Thyroid gland (tissue), 4 donors: ENCODE measurements at regions of chr3 and their contacts with region 1.

Region 1: GRCh38 chr3:150335631-150336030 is 72.5 kb upstream of the TSC22D2 start:
- DNase-seq: no peak
- H3K4me3 ChIP-seq: no peak overlapping the region
- H3K27ac ChIP-seq: no peak overlapping the region
- H3K4me1 ChIP-seq: peaks cover 0 to 5% of the 10 kb centered on the region in 2 donors
- H3K27me3 ChIP-seq: no peaks in the 10 kb centered on the region
- CTCF ChIP-seq: no peak
- POLR2A ChIP-seq: no peak

Region 2: DNA sequence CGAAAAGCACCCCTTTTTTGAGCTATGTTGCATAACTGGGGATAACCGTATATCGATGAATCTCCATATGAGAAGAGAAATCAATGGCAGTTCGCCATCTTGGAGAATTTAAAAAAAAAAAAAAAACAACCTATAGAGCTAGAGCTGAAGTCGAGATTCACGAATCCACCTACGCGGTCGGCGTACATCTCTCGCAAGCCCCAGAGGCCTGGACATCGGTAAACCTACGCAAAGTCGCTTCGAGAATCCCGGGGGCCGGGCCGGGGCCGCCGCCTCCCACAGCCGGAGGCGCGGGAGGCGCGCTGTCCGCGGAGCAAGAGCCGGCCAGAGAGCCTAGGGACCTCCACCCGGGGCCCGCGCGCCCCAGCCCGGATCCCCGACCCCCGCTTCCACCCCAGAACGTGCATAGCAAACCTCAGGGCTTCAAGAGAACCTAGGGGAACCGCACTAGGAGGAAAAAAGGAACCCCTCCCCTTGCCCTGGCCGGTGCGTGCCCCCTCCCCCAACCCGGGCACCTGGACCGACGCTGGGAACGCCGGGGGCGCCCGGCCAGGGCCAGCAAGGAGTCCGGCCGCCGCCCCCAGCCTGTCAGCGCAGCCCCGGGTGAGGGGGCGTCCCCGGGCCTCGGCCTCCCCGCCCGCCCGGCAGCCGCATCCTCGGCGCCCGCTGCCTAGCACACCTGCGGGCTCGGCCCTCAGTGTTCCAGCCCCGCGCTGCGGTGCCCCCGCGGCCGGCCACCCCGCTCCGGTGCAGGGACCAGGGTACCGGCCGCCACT is 365.5 kb before region 1 on chr3:
- intact Hi-C with region 1: no loop called
- DNase-seq: peak; percentile 88 to 90
- H3K4me3 ChIP-seq: peak overlapping the region; percentile 78 to 88 (median 83)
- H3K27ac ChIP-seq: peak overlapping the region; percentile 86 to 92 (median 88)
- H3K4me1 ChIP-seq: peaks cover 6 to 12% of the 10 kb centered on the region in 2 donors
- H3K27me3 ChIP-seq: no peaks in the 10 kb centered on the region
- CTCF ChIP-seq: no peak
- POLR2A ChIP-seq: peak in 1 of 2 donors; percentile 39

Region 3: DNA sequence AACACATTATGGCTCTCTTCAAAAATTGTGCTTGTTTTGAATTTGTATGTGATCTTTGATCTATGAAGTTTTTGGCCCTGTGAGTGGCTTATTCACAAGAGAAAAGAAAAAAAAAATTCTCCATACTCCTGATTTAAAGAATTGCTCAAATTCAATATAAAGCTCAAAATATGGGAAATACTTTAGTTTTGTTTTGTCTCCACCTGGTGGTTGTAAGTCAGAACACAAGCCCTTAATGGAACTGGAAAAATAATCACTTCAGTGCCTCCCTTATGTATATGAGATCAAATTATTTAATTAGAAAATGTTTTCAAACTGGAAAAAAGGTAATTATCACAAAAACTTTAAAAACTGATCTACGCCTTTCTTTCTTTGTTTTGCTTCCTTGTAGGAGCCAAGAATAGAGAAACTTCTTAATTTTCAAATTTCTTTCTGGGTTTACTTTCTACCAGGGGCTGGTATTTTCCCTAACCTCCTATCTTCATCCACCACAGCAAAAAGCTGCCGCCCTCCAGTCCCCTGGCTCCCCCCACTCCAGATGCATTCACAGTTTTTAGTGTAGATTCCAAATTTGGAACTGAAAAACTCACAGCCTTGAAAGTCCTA is 160.0 kb after region 1 on chr3:
- intact Hi-C with region 1: no loop called
- DNase-seq: no peak
- H3K4me3 ChIP-seq: no peak overlapping the region
- H3K27ac ChIP-seq: no peak overlapping the region
- H3K4me1 ChIP-seq: no peaks in the 10 kb centered on the region
- H3K27me3 ChIP-seq: no peaks in the 10 kb centered on the region
- CTCF ChIP-seq: peak; percentile 55 to 87 (median 68)
- POLR2A ChIP-seq: no peak

Region 4: GRCh38 chr3:150699068-150699639 is 363.5 kb after region 1 on chr3:
- intact Hi-C with region 1: loop called (anchors 10 kb)
- DNase-seq: no peak
- H3K4me3 ChIP-seq: no peak overlapping the region
- H3K27ac ChIP-seq: no peak overlapping the region
- H3K4me1 ChIP-seq: peaks cover 0 to 3% of the 10 kb centered on the region in 2 donors
- H3K27me3 ChIP-seq: no peaks in the 10 kb centered on the region
- CTCF ChIP-seq: no peak
- POLR2A ChIP-seq: no peak